Right ventricle myocardium inferior (tissue), 1 donor: ENCODE measurements at regions of chr7 and their contacts with region 1.

Region 1: DNA sequence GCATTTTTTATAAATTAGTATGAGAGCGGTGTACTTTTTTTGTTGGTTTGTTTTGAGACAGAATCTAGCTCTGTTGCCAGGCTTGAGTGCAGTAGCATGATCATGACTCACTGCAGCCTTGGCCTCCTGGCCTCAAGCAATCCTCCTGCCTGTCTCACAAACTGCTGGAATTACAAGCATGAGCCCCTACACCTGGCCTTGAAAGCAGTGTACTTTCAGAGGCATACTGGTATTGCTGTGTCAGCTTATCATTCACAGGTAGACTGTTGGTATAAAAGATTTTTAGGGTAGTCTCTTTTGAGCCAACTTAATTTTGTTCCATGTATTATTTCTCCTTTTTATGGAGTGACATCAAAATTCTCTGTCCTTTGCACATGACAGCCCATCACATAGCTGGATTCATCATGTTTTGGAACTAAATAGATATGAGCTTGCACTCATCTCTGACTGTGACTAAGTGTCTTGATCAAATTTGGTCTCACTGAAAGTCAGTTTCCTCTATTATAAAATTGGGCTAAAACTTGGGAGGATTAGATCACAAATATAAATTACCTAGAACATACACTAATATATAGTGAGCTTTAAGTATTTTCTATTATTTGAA is 12.4 kb downstream of the GNAT3 start:
- DNase-seq: no peak
- ATAC-seq: peak; percentile 60

Region 2: DNA sequence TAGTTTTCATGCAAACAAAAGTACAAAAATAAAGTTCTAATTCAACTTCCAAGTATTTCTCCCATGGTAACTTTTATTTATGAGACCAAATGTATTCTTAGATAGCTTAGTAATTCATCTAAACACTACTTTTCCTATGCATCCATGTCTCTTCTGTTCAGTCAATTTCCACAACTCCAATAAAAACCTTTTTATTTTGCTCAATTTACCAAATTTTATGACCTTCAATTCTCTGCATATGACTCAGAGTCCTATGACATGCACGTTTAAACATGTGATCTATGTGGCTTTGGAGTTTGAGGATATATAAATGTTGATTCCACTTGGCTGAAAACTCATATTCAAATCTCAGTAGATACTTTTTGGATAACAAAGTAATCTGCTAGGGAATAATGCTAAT is 52.9 kb after region 1 on chr7:
- intact Hi-C with region 1: loop called (anchors 5 kb)
- DNase-seq: no peak
- ATAC-seq: no peak

Region 3: DNA sequence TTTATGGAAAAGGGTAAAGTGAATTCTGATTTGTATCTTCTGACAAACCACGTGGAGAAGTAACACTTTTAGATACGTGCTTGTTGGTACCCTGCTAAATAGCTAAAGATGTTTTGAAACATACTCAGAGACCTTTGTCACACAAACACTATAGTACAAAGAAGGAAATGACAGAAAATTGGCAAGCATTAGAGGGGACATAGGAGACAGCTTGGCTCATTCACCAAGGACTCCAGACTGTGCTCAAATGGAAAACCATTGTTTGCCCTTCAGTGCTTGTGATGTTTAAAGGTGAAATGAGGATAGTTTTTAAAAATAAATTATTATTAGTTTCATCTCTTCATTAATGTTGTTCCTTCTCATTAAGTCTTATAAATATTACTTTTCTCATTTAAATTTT is 105.0 kb after region 1 on chr7:
- intact Hi-C with region 1: loop called (anchors 5 kb)
- DNase-seq: no peak
- ATAC-seq: peak; percentile 88

Region 4: GRCh38 chr7:80859272-80859970 is 360.0 kb after region 1 on chr7:
- intact Hi-C with region 1: no loop called
- DNase-seq: no peak
- ATAC-seq: peak; percentile 76